HepG2 (cell line): ENCODE measurements at regions of chr16 and their contacts with region 1.

Region 1: DNA sequence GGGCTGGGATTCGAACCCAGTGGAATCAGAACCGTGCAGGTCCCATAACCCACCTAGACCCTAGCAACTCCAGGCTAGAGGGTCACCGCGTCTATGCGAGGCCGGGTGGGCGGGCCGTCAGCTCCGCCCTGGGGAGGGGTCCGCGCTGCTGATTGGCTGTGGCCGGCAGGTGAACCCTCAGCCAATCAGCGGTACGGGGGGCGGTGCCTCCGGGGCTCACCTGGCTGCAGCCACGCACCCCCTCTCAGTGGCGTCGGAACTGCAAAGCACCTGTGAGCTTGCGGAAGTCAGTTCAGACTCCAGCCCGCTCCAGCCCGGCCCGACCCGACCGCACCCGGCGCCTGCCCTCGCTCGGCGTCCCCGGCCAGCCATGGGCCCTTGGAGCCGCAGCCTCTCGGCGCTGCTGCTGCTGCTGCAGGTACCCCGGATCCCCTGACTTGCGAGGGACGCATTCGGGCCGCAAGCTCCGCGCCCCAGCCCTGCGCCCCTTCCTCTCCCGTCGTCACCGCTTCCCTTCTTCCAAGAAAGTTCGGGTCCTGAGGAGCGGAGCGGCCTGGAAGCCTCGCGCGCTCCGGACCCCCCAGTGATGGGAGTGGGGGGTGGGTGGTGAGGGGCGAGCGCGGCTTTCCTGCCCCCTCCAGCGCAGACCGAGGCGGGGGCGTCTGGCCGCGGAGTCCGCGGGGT is at the start of gene CDH1:
- DNase-seq: no peak
- ATAC-seq: peak; percentile 48
- H3K4me3 ChIP-seq: peak within 1 kb of the TSS; percentile 48 to 78 (median 60)
- H3K27ac ChIP-seq: no peak within 1 kb of the TSS
- H3K4me1 ChIP-seq: peaks cover 91% of the 10 kb centered on the region
- H3K27me3 ChIP-seq: peaks cover 1 to 26% of the 10 kb centered on the region in 2 experiments; a peak in 3 of 5 replicates
- CTCF ChIP-seq: no peak
- EP300 ChIP-seq: no peak
- POLR2A ChIP-seq: 0 out of 4 replicates have a peak, but pooled peaks of 1 of the 2 experiments have one; percentile 38
- RAD21 ChIP-seq: peak; percentile 32; the same call in 1 of the 2 replicates
- total RNA-seq, gene CDH1: 0.70 and 0.95 TPM in 2 replicates

Region 2: DNA sequence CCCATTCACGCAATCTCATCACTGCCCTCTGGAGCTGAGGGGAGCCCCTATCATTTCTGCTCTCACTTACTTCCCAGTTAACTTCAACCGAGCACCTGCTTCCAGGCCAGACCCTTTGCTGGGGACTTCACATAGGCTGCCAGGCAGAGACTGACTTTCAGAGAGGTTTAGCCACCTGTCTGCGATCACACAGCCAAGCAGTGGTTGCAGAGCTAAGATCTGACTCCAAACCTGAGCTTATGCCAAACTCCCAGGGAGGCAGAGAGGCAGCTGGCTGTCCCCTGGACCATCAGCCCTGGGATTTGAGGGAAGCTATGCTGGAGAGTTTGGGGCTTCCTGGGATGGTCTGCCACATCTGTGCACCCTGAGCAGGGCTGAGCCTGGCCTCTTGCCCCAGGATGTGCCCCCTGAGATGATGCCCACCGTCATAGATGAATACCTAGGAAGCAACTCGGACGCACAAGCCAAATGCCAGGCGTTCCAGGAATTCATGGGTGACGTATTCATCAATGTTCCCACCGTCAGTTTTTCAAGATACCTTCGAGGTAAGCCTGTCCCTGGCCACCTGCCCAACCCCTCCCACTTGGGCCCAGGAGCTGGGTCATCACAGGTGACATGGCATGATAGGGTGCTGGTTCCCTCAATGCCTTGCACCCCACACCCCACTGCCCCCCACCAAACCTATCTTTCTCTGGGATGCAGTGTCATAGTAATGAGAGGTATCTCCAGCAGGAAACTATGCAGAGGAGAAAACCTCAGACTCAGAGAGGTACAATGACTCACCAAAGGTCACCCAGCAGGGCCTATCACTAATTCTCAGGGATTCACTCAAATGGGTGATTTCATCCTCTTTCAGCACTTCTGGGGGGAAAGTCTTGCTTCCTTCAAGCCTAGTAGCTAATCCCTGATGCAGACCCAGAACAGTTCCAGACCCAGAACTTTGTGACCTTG is 1766.1 kb before region 1 on chr16:
- CTCF ChIA-PET with region 1: no interaction called
- POLR2A ChIA-PET with region 1: no interaction called
- in situ Hi-C with region 1: no loop called
- intact Hi-C with region 1: loop called (anchors 5 kb)
- DNase-seq: no peak
- ATAC-seq: no peak
- H3K4me3 ChIP-seq: no peak overlapping the region
- H3K27ac ChIP-seq: no peak overlapping the region
- H3K4me1 ChIP-seq: peaks cover 26% of the 10 kb centered on the region
- H3K27me3 ChIP-seq: peaks cover 0 to 4% of the 10 kb centered on the region in 2 experiments; a peak in 1 of 5 replicates
- CTCF ChIP-seq: no peak
- EP300 ChIP-seq: no peak
- POLR2A ChIP-seq: no peak
- RAD21 ChIP-seq: no peak

Region 3: GRCh38 chr16:67561824-67562525 is 1175.2 kb before region 1 on chr16:
- CTCF ChIA-PET with region 1: no interaction called
- POLR2A ChIA-PET with region 1: no interaction called
- in situ Hi-C with region 1: no loop called
- intact Hi-C with region 1: no loop called
- DNase-seq: peak; percentile 97
- ATAC-seq: peak; percentile 92
- H3K4me3 ChIP-seq: peak overlapping the region; percentile 90 to 99 (median 95)
- H3K27ac ChIP-seq: peak overlapping the region; percentile 99
- H3K4me1 ChIP-seq: peaks cover 40% of the 10 kb centered on the region
- H3K27me3 ChIP-seq: no peaks in the 10 kb centered on the region; a peak in 1 of 5 replicates
- CTCF ChIP-seq: peak; percentile 13; the same call in 1 of the 2 replicates
- EP300 ChIP-seq: no peak; a peak in 2 of 4 replicates
- POLR2A ChIP-seq: peak; percentile 70 to 88
- RAD21 ChIP-seq: 0 out of 2 replicates have a peak, but pooled peaks have one; percentile 16

Region 4: DNA sequence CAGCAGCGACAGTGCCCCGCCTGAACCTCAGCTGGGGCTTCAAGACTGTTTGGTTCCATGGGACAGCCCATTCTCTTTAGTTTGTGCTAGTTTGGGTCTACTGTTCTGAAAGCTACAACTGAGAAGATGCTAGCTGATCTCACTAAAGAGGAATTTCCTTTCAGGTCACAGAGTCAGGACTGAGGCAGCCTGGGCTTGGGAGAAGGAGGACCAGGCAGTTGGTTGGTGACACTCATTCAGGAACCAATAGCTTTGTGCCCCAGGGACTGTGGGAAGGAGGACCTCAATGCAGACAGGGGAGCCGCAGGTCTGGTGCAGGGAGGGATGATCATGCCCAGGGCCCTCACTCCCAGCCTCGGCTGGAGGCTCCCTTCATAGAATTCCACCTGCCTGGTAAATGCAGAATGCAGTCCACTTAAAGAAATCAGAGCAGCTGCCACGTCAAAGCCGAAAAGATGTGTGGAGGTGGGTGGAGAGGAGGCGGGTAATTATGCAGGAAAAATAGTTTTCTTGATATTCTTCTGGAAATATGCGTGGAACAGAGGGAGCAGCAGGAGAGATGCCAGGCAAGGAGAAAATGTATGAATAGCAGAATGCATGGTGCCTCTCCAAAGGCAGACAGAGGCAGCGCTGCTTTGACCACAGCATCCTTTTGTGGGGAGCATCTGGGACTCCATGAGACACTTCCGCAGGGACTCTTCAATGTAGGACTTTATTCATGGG is 230.7 kb before region 1 on chr16:
- CTCF ChIA-PET with region 1: no interaction called
- POLR2A ChIA-PET with region 1: no interaction called
- in situ Hi-C with region 1: no loop called
- intact Hi-C with region 1: no loop called
- DNase-seq: no peak
- ATAC-seq: no peak
- H3K4me3 ChIP-seq: no peak overlapping the region
- H3K27ac ChIP-seq: no peak overlapping the region
- H3K4me1 ChIP-seq: peaks cover 17% of the 10 kb centered on the region
- H3K27me3 ChIP-seq: peaks cover 2 to 59% of the 10 kb centered on the region in 2 experiments; a peak in 3 of 5 replicates
- CTCF ChIP-seq: no peak
- EP300 ChIP-seq: no peak
- POLR2A ChIP-seq: no peak
- RAD21 ChIP-seq: no peak

Region 5: GRCh38 chr16:68646953-68647659 is 90.1 kb before region 1 on chr16:
- CTCF ChIA-PET with region 1: no interaction called
- POLR2A ChIA-PET with region 1: no interaction called
- in situ Hi-C with region 1: no loop called
- intact Hi-C with region 1: no loop called
- DNase-seq: no peak
- ATAC-seq: no peak
- H3K4me3 ChIP-seq: no peak overlapping the region
- H3K27ac ChIP-seq: no peak overlapping the region
- H3K4me1 ChIP-seq: peaks cover 24% of the 10 kb centered on the region
- H3K27me3 ChIP-seq: peaks cover 20 to 69% of the 10 kb centered on the region in 2 experiments
- CTCF ChIP-seq: no peak
- EP300 ChIP-seq: no peak
- POLR2A ChIP-seq: no peak
- RAD21 ChIP-seq: no peak

Region 6: GRCh38 chr16:68752602-68753001 is 15.4 kb after region 1 on chr16:
- CTCF ChIA-PET with region 1: no interaction called
- POLR2A ChIA-PET with region 1: interaction called, 31 read pairs
- in situ Hi-C with region 1: no loop called
- intact Hi-C with region 1: no loop called
- DNase-seq: peak; percentile 40
- ATAC-seq: no peak; the same call in 2 of the 3 replicates
- H3K4me3 ChIP-seq: no peak overlapping the region
- H3K27ac ChIP-seq: no peak overlapping the region
- H3K4me1 ChIP-seq: peaks cover 51% of the 10 kb centered on the region
- H3K27me3 ChIP-seq: no peaks in the 10 kb centered on the region
- CTCF ChIP-seq: no peak
- EP300 ChIP-seq: no peak
- POLR2A ChIP-seq: no peak
- RAD21 ChIP-seq: no peak

Region 7: DNA sequence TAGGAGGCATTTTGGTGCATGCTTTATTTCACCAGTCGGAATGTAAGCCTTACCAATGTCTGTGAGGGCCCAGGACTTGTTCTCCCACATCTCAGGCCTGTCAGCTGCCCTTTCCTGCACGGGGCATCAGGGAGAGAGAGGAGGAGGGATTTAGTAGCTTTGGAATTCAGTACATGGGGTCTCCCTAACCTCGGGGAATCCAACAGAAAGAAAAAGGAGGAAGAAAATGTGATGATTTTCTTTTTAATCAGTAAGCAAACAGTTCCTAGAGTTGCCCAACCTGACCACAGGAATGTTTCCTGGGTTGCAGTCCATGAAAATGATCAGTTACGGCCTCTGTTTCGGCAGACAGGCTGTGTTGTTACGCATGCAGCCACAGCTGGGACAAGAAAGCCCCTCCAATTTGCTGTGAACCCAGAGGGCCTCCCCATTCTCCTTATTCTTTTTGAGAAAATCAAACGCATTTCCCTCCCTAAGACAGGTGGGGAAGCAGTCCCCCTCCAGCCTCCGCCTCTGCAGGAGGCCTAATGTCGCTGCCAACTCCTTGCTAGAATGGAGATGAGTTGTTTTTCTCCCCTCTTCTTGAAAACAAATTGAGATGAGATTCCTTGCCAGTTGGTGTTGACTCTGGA is 53.1 kb after region 1 on chr16:
- CTCF ChIA-PET with region 1: no interaction called
- POLR2A ChIA-PET with region 1: interaction called, 134 read pairs
- in situ Hi-C with region 1: loop called (anchors 5 kb)
- intact Hi-C with region 1: no loop called
- DNase-seq: peak; percentile 96
- ATAC-seq: peak; percentile 70
- H3K4me3 ChIP-seq: peak overlapping the region; percentile 11 to 58 (median 24); a peak in 5 of 6 replicates
- H3K27ac ChIP-seq: peak overlapping the region; percentile 74
- H3K4me1 ChIP-seq: peaks cover 86% of the 10 kb centered on the region
- H3K27me3 ChIP-seq: no peaks in the 10 kb centered on the region
- CTCF ChIP-seq: 0 out of 2 replicates have a peak, but pooled peaks have one; percentile 14
- EP300 ChIP-seq: peak; percentile 80 to 93; a peak in 3 of 4 replicates
- POLR2A ChIP-seq: peak in 1 of 2 experiments; percentile 69; a peak in 2 of 4 replicates
- RAD21 ChIP-seq: peak; percentile 23; the same call in 1 of the 2 replicates

Region 8: DNA sequence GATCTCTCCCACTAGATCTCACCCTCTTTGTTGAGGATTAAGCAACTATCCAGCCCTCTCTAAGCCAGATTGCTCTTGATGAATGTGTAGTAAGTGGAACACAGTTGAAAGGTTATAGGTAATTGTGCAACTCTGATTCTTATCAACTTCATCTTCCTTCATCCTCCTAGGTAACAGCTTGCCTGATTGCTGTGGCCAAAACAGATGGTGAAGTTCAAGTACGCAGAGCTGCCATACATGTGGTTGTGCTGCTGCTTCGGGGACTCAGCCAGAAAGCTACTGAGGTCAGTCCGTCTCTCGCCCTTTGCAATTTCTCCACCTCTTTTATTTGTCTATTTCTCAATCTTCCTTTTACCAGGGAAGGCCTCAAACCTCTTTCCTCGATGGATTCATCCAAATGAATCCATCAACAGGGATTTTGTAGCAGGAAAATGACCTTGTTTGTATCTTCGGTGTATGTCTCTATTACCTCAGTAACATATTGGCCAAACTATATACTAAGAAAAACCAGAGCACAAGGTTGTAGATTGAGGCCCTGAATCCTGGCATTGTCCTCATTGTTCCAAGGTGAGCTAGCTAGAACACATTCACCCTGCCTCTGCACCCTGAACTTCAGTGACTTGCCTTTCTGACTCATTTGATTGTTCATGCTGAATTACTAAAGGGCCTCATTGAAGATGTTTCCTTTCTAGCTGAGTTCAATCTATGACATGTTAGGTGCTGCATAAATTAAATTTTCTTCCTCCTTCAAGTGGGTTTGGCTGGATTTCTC is 303.1 kb after region 1 on chr16:
- CTCF ChIA-PET with region 1: no interaction called
- POLR2A ChIA-PET with region 1: no interaction called
- in situ Hi-C with region 1: no loop called
- intact Hi-C with region 1: loop called (anchors 1 kb)
- DNase-seq: peak; percentile 89
- ATAC-seq: peak; percentile 86
- H3K4me3 ChIP-seq: peak overlapping the region in 1 of 3 experiments; percentile 12; a peak in 1 of 6 replicates
- H3K27ac ChIP-seq: peak overlapping the region; percentile 68
- H3K4me1 ChIP-seq: peaks cover 23% of the 10 kb centered on the region
- H3K27me3 ChIP-seq: no peaks in the 10 kb centered on the region
- CTCF ChIP-seq: no peak
- EP300 ChIP-seq: peak in 1 of 2 experiments; percentile 64; a peak in 2 of 4 replicates
- POLR2A ChIP-seq: no peak; a peak in 1 of 4 replicates
- RAD21 ChIP-seq: no peak